Breast epithelium (tissue), 4 donors: ENCODE measurements at regions of chr4 and their contacts with region 1.

Region 1: DNA sequence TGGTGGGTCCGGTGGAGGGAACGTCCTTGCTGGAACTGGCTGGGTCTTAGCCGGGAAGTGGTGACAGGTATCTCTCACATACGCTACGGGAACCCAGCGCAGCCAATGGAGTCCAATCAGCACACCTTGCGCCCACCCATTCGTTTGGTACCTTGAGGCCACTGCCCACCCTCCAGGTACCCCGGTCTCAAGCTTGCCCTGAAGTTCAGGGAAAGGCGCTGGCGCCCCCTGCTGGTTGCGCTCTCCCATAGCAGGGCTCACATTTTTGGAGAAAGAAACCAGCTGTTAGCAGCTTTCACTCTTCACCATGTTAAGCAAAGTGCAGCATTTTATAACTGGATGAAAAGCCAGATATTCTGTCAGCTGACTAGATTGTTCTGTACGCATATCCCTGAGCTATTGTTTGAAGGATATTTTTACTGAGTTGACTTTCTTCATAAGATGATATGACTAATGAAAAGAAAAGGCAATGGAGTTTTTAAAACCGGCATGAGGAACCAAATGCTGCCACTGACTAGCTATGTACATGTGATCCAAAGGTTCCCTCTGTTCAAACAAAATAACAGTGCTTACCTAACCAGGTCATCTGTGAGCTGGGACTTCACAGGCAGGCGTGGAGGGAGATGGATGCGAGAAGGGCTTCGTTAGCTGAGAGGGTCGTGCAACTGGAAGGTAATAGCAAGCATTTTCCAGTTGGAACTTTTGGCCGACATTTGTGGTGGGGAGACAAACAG is 43.7 kb downstream of the OTOP1 start:
- DNase-seq: no peak
- H3K4me3 ChIP-seq: no peak overlapping the region
- H3K27ac ChIP-seq: no peak overlapping the region
- H3K4me1 ChIP-seq: no peaks in the 10 kb centered on the region
- H3K27me3 ChIP-seq: peaks cover 0 to 2% of the 10 kb centered on the region in 2 donors
- CTCF ChIP-seq: peak in 2 of 3 donors; percentile 35 to 46
- POLR2A ChIP-seq: no peak

Region 2: GRCh38 chr4:4203688-4204400 is 20.8 kb after region 1 on chr4:
- intact Hi-C with region 1: no loop called
- DNase-seq: no peak
- H3K4me3 ChIP-seq: no peak overlapping the region
- H3K27ac ChIP-seq: no peak overlapping the region
- H3K4me1 ChIP-seq: no peaks in the 10 kb centered on the region
- H3K27me3 ChIP-seq: no peaks in the 10 kb centered on the region
- CTCF ChIP-seq: no peak
- POLR2A ChIP-seq: no peak

Region 3: DNA sequence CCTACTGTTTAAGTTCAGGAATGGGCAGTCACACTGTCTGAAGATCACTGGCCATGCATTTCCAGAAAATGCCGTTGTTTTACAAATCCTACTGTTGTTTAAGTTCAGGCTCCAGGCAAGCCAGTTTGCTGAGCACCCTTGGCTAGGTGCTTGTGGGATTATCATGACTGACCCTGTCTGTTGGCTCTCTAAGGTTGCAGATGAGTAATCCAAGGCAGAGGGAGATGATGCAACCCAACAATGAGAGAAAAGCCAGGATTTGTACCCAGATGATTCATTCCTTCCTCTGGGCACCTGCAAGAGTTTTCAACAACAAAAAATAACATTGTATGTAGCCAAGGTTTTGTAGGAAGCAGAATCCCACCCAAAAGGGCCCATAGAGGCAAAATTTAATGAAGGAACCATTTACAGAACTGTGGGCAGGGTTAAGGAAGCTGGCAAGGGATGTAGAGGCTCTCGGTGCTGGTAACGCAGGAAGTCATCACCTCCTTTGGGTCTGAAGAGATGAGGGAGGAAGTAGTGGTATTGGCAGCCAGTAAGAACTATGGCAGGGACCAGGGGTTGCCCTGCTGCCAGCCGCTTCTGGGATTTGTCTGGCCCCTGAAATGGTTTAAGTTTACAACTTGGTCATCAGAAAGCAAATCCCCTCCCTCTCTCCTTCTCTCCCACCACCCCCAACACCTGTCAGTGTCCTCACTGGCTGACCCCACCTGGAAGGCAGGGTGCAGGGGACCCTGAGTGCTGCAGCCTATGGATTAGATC is 731.2 kb after region 1 on chr4:
- intact Hi-C with region 1: no loop called
- DNase-seq: no peak
- H3K4me3 ChIP-seq: no peak overlapping the region
- H3K27ac ChIP-seq: no peak overlapping the region
- H3K4me1 ChIP-seq: no peaks in the 10 kb centered on the region
- H3K27me3 ChIP-seq: no peaks in the 10 kb centered on the region
- CTCF ChIP-seq: no peak
- POLR2A ChIP-seq: no peak

Region 4: DNA sequence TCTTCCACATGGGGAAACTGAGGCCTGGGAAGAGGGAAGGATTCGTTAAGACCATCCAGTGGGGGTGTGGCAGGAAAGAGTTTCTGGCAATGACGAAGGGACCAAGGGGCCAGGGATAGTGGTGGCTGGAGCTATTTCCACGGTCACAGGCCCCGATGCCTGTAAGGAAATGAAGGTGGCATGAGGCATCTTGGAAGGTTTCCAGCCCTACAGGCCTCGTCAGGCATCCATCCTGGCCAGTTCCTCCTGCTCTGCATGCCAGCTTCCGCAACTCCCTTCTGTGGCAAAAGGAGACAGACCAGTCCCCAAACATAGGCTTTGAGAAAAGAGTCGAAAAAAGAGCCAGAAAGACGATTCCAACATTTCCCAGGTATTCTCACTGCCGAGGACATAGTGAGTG is 1844.4 kb after region 1 on chr4:
- intact Hi-C with region 1: loop called (anchors 5 kb)
- DNase-seq: peak in 1 of 2 donors; percentile 51
- H3K4me3 ChIP-seq: no peak overlapping the region
- H3K27ac ChIP-seq: no peak overlapping the region
- H3K4me1 ChIP-seq: no peaks in the 10 kb centered on the region
- H3K27me3 ChIP-seq: no peaks in the 10 kb centered on the region
- CTCF ChIP-seq: no peak
- POLR2A ChIP-seq: no peak